CD4-positive, alpha-beta memory T cell (primary cell): ENCODE measurements at regions of chr3 and their contacts with region 1.

Region 1: GRCh38 chr3:184135149-184135910 is at the start of gene EIF2B5:
- DNase-seq: peak; percentile 85 to 90 (median 86)
- H3K4me3 ChIP-seq: peak within 1 kb of the TSS; percentile 95 to 96
- H3K4me3 Mint-ChIP-seq: peak within 1 kb of the TSS; percentile 95 to 99 (median 98)
- H3K27ac ChIP-seq: peak within 1 kb of the TSS; percentile 78
- H3K27ac Mint-ChIP-seq: peak within 1 kb of the TSS; percentile 90 to 98 (median 97)
- H3K4me1 ChIP-seq: peaks cover 28% of the 10 kb centered on the region
- H3K4me1 Mint-ChIP-seq: peaks cover 23 to 49% (median 33%) of the 10 kb centered on the region in 4 donors
- H3K27me3 ChIP-seq: no peaks in the 10 kb centered on the region
- H3K27me3 Mint-ChIP-seq: no peaks in the 10 kb centered on the region
- total RNA-seq, gene EIF2B5: 82.3 to 87.6 TPM

Region 2: DNA sequence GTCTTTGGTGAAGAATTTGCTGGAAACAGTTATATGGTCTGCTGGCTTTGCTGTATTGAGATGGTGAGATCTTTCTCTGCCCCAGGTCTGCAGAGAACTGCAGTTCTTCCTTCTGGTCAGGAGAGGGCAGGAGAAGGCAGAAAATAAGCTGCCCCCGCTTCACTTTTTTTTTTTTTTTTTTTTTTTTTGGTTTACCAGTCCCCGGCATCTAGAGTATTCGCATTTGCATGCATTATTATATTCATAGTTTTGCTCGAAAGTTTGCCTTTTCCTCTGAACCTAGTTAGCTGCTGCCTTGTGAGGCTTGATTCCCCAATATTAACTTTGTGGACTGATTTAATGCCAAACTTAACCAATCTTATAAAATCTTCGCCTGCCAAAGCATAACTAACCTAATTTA is 240.0 kb before region 1 on chr3:
- CTCF ChIA-PET with region 1: no interaction called
- POLR2A ChIA-PET with region 1: interaction called, 3 read pairs
- intact Hi-C with region 1: loop called (anchors 5 kb)
- DNase-seq: peak; percentile 48 to 60 (median 57)
- H3K4me3 ChIP-seq: no peak overlapping the region
- H3K4me3 Mint-ChIP-seq: no peak overlapping the region
- H3K27ac ChIP-seq: no peak overlapping the region
- H3K27ac Mint-ChIP-seq: no peak overlapping the region
- H3K4me1 ChIP-seq: no peaks in the 10 kb centered on the region
- H3K4me1 Mint-ChIP-seq: peaks cover 0 to 3% (median 1%) of the 10 kb centered on the region in 4 donors
- H3K27me3 ChIP-seq: no peaks in the 10 kb centered on the region
- H3K27me3 Mint-ChIP-seq: peaks cover 17 to 37% of the 10 kb centered on the region in 2 donors

Region 3: GRCh38 chr3:184017672-184018423 is 117.5 kb before region 1 on chr3 and contains the start of gene ABCC5:
- CTCF ChIA-PET with region 1: interaction called, 4 read pairs
- POLR2A ChIA-PET with region 1: no interaction called
- intact Hi-C with region 1: loop called (anchors 1 kb)
- DNase-seq: peak; percentile 79 to 84 (median 82)
- H3K4me3 ChIP-seq: peak within 1 kb of the TSS; percentile 93 to 96
- H3K4me3 Mint-ChIP-seq: peak within 1 kb of the TSS; percentile 98 to 100 (median 100)
- H3K27ac ChIP-seq: peak within 1 kb of the TSS; percentile 43
- H3K27ac Mint-ChIP-seq: peak within 1 kb of the TSS; percentile 90 to 96 (median 93)
- H3K4me1 ChIP-seq: peaks cover 17% of the 10 kb centered on the region
- H3K4me1 Mint-ChIP-seq: peaks cover 16 to 35% (median 24%) of the 10 kb centered on the region in 4 donors
- H3K27me3 ChIP-seq: no peaks in the 10 kb centered on the region
- H3K27me3 Mint-ChIP-seq: peaks cover 6 to 8% of the 10 kb centered on the region in 2 donors
- total RNA-seq, gene ABCC5: 42.3 to 42.6 TPM

Region 4: GRCh38 chr3:184099806-184100686 is 35.3 kb before region 1 on chr3:
- CTCF ChIA-PET with region 1: no interaction called
- POLR2A ChIA-PET with region 1: no interaction called
- intact Hi-C with region 1: no loop called
- DNase-seq: no peak
- H3K4me3 ChIP-seq: no peak overlapping the region
- H3K4me3 Mint-ChIP-seq: no peak overlapping the region
- H3K27ac ChIP-seq: no peak overlapping the region
- H3K27ac Mint-ChIP-seq: peak overlapping the region in 1 of 7 donors; percentile 11
- H3K4me1 ChIP-seq: no peaks in the 10 kb centered on the region
- H3K4me1 Mint-ChIP-seq: no peaks in the 10 kb centered on the region
- H3K27me3 ChIP-seq: no peaks in the 10 kb centered on the region
- H3K27me3 Mint-ChIP-seq: peaks cover 2 to 10% of the 10 kb centered on the region in 2 donors

Region 5: GRCh38 chr3:184154885-184155643 is 19.7 kb after region 1 on chr3 and contains the start of gene DVL3:
- CTCF ChIA-PET with region 1: interaction called, 3 read pairs
- POLR2A ChIA-PET with region 1: interaction called, 18 read pairs
- intact Hi-C with region 1: loop called (anchors 1 kb)
- DNase-seq: peak in 4 of 5 donors; percentile 38 to 56 (median 44)
- H3K4me3 ChIP-seq: peak within 1 kb of the TSS; percentile 56 to 81
- H3K4me3 Mint-ChIP-seq: peak within 1 kb of the TSS; percentile 91 to 97 (median 95)
- H3K27ac ChIP-seq: peak within 1 kb of the TSS; percentile 59
- H3K27ac Mint-ChIP-seq: peak within 1 kb of the TSS; percentile 22 to 95 (median 93)
- H3K4me1 ChIP-seq: peaks cover 32% of the 10 kb centered on the region
- H3K4me1 Mint-ChIP-seq: peaks cover 20 to 34% (median 28%) of the 10 kb centered on the region in 4 donors
- H3K27me3 ChIP-seq: no peaks in the 10 kb centered on the region
- H3K27me3 Mint-ChIP-seq: no peaks in the 10 kb centered on the region
- total RNA-seq, gene DVL3: 43.3 to 46.4 TPM

Region 6: DNA sequence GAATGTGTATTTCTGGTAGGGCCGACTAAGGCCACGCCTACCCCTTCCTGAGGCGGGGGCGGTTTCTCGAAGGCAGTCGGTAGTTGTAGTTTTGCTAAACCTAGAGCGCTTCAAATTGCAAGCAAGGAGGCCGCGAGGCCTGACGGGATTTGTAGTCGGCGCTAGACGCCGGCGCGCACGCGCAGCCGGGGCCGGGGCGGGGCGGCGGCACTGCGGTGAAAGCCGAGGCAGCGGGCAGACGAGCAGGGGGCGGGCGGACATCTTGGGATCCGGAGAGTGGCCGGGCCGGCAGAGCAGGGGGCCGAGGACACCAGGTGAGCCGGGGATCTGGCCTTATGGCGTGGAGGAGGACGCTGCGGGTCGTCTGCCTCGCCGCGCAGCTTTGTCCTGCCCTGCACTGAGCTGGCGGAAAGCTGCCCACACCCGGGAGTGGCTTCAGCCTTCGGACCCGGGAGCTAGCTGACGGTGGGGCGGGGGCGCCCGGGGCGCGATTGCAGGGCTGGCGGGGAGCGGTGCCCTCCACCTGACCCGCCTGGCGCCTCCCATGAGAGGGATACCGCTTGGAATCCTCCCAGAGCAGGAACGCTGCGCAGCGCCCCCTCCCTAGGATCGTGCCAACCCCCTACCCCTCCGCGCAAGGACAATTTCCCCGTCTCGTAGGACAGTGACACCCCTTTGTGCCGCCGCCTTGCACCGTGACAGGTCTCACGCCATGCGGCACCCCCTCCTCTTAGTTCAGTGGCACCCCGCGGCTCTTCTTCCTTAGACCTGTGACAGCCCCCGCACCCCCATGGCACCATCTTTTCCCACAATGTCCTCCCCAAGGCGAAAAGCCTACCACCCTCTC is 39.5 kb after region 1 on chr3 and contains the start of gene AP2M1:
- CTCF ChIA-PET with region 1: interaction called, 8 read pairs
- POLR2A ChIA-PET with region 1: interaction called, 20 read pairs
- intact Hi-C with region 1: loop called (anchors 1 kb)
- DNase-seq: peak; percentile 98 to 99 (median 99)
- H3K4me3 ChIP-seq: peak within 1 kb of the TSS; percentile 68 to 90
- H3K4me3 Mint-ChIP-seq: peak within 1 kb of the TSS; percentile 90 to 98 (median 96)
- H3K27ac ChIP-seq: peak within 1 kb of the TSS; percentile 88
- H3K27ac Mint-ChIP-seq: peak within 1 kb of the TSS; percentile 88 to 95 (median 92)
- H3K4me1 ChIP-seq: peaks cover 37% of the 10 kb centered on the region
- H3K4me1 Mint-ChIP-seq: peaks cover 17 to 43% (median 30%) of the 10 kb centered on the region in 4 donors
- H3K27me3 ChIP-seq: no peaks in the 10 kb centered on the region
- H3K27me3 Mint-ChIP-seq: no peaks in the 10 kb centered on the region
- total RNA-seq, gene AP2M1: 206 to 208 TPM

Region 7: DNA sequence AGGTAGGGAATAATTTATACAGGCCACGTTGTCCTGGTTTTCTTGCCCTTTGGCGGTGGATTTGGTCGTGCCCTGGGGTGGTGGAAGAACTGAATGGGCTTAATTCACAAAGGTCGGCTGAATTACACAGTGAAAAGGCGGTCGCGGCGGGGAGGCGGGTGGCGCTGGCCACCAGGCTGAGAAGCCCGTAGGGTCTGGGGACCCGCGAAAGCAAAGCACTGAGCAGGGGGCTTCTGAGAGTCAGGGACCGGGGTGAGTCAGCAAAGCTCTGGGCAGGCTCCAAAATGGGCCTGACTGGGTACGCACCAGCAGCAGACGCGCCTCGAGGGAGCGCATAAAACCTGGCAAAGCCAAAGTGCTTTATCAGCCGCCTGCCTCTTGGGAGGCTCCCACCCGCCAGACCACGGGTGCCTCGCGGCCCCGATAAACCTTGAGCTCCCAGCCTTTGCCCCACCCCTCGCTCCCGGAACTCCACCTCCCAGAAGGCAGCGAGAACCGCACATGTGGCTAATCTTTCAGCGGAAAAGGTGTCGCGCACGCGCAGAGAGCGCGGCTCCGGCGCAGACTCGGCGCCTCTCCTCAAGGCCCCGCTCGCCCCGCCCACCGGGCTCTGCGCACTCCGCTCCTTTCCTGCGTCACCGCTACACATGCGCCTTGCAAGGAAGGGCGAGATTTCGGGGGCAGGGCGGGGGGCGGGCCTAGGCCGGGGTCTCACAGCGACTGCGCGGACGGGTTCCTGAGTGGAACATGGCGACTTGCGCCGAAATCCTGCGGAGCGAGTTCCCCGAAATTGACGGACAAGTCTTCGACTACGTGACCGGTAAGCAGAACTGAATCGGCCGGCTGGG is 50.4 kb after region 1 on chr3 and contains the start of gene ABCF3:
- CTCF ChIA-PET with region 1: interaction called, 5 read pairs
- POLR2A ChIA-PET with region 1: interaction called, 15 read pairs
- intact Hi-C with region 1: loop called (anchors 1 kb)
- DNase-seq: peak; percentile 98 to 100 (median 99)
- H3K4me3 ChIP-seq: peak within 1 kb of the TSS; percentile 87 to 98
- H3K4me3 Mint-ChIP-seq: peak within 1 kb of the TSS; percentile 98 to 99 (median 98)
- H3K27ac ChIP-seq: peak within 1 kb of the TSS; percentile 80
- H3K27ac Mint-ChIP-seq: peak within 1 kb of the TSS; percentile 92 to 99 (median 97)
- H3K4me1 ChIP-seq: peaks cover 30% of the 10 kb centered on the region
- H3K4me1 Mint-ChIP-seq: peaks cover 26 to 47% (median 36%) of the 10 kb centered on the region in 4 donors
- H3K27me3 ChIP-seq: no peaks in the 10 kb centered on the region
- H3K27me3 Mint-ChIP-seq: no peaks in the 10 kb centered on the region
- total RNA-seq, gene ABCF3: 122 to 124 TPM

Region 8: GRCh38 chr3:184261270-184261853 is 126.0 kb after region 1 on chr3 and contains the start of gene CAMK2N2:
- CTCF ChIA-PET with region 1: no interaction called
- POLR2A ChIA-PET with region 1: interaction called, 10 read pairs
- intact Hi-C with region 1: no loop called
- DNase-seq: peak; percentile 31 to 71 (median 36)
- H3K4me3 ChIP-seq: peak within 1 kb of the TSS; percentile 52 to 61
- H3K4me3 Mint-ChIP-seq: peak within 1 kb of the TSS; percentile 86 to 94 (median 90)
- H3K27ac ChIP-seq: no peak within 1 kb of the TSS
- H3K27ac Mint-ChIP-seq: peak within 1 kb of the TSS; percentile 0 to 90 (median 68)
- H3K4me1 ChIP-seq: peaks cover 25% of the 10 kb centered on the region
- H3K4me1 Mint-ChIP-seq: peaks cover 14 to 35% (median 18%) of the 10 kb centered on the region in 4 donors
- H3K27me3 ChIP-seq: no peaks in the 10 kb centered on the region
- H3K27me3 Mint-ChIP-seq: peaks cover 3 to 10% of the 10 kb centered on the region in 2 donors
- total RNA-seq, gene CAMK2N2: 0.25 TPM in 1 of 2 experiments, not detected in the other